PC-3 (cell line): ENCODE measurements at regions of chr4 and their contacts with region 1.

Region 1: GRCh38 chr4:78951862-78952472 is 12.7 kb upstream of the PAQR3 start:
- DNase-seq: peak; percentile 61
- ATAC-seq: peak; percentile 48; the same call in 1 of the 2 replicates
- H3K4me3 ChIP-seq: no peak overlapping the region
- H3K27ac ChIP-seq: no peak overlapping the region
- H3K4me1 ChIP-seq: no peaks in the 10 kb centered on the region
- H3K27me3 ChIP-seq: peaks cover 5% of the 10 kb centered on the region; the same call in 1 of the 2 replicates
- CTCF ChIP-seq: peak; percentile 69

Region 2: DNA sequence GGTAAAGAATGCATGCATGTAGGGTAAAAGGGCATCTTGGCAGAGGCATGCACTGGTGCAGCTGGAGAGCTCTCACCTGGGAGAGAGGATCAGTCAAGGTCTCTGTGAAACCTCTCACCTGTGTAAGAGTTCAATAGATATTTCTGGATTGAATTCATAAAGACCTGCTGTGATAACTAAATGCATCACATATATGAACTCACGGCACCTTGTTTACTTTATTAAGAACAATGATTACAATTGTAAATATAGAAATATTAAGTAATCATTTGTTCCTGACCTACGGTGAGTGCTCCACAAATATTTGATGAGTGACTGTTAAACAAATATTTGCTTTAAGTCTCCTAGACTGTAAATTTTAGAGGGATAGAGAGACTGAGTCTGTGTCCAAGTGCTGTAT is 73.2 kb after region 1 on chr4:
- CTCF ChIA-PET with region 1: no interaction called
- POLR2A ChIA-PET with region 1: no interaction called
- intact Hi-C with region 1: loop called (anchors 5 kb)
- DNase-seq: peak; percentile 83
- ATAC-seq: peak; percentile 87
- H3K4me3 ChIP-seq: no peak overlapping the region
- H3K27ac ChIP-seq: peak overlapping the region; percentile 23
- H3K4me1 ChIP-seq: peaks cover 34% of the 10 kb centered on the region
- H3K27me3 ChIP-seq: no peaks in the 10 kb centered on the region
- CTCF ChIP-seq: no peak

Region 3: DNA sequence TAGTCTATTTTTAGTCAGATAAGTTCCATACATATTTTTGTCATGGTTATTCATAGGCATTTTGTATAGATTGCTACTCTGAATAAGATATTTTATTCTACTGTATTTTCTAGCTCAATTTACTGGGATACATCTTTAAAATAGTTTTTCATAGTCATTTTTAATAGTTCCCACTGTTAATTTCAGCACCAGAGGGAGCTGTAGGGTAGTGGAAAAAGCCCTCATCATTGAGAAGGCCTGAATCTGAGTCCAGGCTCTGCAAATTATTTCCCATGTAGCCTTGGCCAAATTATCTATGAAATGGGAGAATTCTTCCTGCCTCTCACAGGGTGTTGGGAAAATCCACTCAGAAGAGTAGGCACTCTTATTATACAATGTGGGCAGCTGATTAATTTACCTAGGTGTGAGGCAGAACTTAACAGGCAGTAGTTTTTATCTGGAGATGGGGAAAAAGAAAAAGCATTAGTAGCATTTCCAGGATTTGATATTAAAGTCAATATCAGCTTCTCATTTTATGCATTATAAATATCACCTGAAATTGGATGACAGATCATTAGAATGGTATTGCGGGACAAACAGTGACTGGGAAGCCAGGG is 90.2 kb after region 1 on chr4:
- CTCF ChIA-PET with region 1: interaction called, 4 read pairs
- POLR2A ChIA-PET with region 1: no interaction called
- intact Hi-C with region 1: loop called (anchors 2 kb)
- DNase-seq: peak; percentile 47
- ATAC-seq: peak; percentile 35; the same call in 1 of the 2 replicates
- H3K4me3 ChIP-seq: no peak overlapping the region
- H3K27ac ChIP-seq: no peak overlapping the region
- H3K4me1 ChIP-seq: no peaks in the 10 kb centered on the region
- H3K27me3 ChIP-seq: no peaks in the 10 kb centered on the region
- CTCF ChIP-seq: peak; percentile 66

Region 4: GRCh38 chr4:79317711-79318110 is 365.7 kb after region 1 on chr4:
- CTCF ChIA-PET with region 1: no interaction called
- POLR2A ChIA-PET with region 1: no interaction called
- intact Hi-C with region 1: loop called (anchors 10 kb)
- DNase-seq: no peak
- ATAC-seq: no peak
- H3K4me3 ChIP-seq: no peak overlapping the region
- H3K27ac ChIP-seq: no peak overlapping the region
- H3K4me1 ChIP-seq: no peaks in the 10 kb centered on the region
- H3K27me3 ChIP-seq: no peaks in the 10 kb centered on the region
- CTCF ChIP-seq: no peak

Region 5: GRCh38 chr4:79576429-79576753 is 624.4 kb after region 1 on chr4:
- CTCF ChIA-PET with region 1: no interaction called
- POLR2A ChIA-PET with region 1: no interaction called
- intact Hi-C with region 1: loop called (anchors 1 kb)
- DNase-seq: peak; percentile 60
- ATAC-seq: peak; percentile 90
- H3K4me3 ChIP-seq: no peak overlapping the region
- H3K27ac ChIP-seq: no peak overlapping the region
- H3K4me1 ChIP-seq: no peaks in the 10 kb centered on the region
- H3K27me3 ChIP-seq: 0 out of 2 replicates have a peak, but pooled peaks cover 2% of the 10 kb centered on the region
- CTCF ChIP-seq: peak; percentile 66

Region 6: GRCh38 chr4:79893456-79893855 is 941.5 kb after region 1 on chr4:
- CTCF ChIA-PET with region 1: no interaction called
- POLR2A ChIA-PET with region 1: no interaction called
- intact Hi-C with region 1: loop called (anchors 5 kb)
- DNase-seq: no peak
- ATAC-seq: no peak
- H3K4me3 ChIP-seq: no peak overlapping the region
- H3K27ac ChIP-seq: no peak overlapping the region
- H3K4me1 ChIP-seq: no peaks in the 10 kb centered on the region
- H3K27me3 ChIP-seq: no peaks in the 10 kb centered on the region
- CTCF ChIP-seq: no peak

Region 7: GRCh38 chr4:80215449-80216052 is 1263.6 kb after region 1 on chr4:
- CTCF ChIA-PET with region 1: no interaction called
- POLR2A ChIA-PET with region 1: no interaction called
- intact Hi-C with region 1: loop called (anchors 5 kb)
- DNase-seq: peak; percentile 50
- ATAC-seq: no peak
- H3K4me3 ChIP-seq: no peak overlapping the region
- H3K27ac ChIP-seq: no peak overlapping the region
- H3K4me1 ChIP-seq: peaks cover 20% of the 10 kb centered on the region
- H3K27me3 ChIP-seq: no peaks in the 10 kb centered on the region
- CTCF ChIP-seq: peak; percentile 68